Activated CD8-positive, alpha-beta T cell treated with anti-CD3 and anti-CD28 coated beads for 36 hours (primary cell): ENCODE measurements at regions of chr19 and their contacts with region 1.

Region 1: GRCh38 chr19:36605101-36605876 is at the start of gene ZNF382:
- DNase-seq: peak; percentile 89
- ATAC-seq: peak; percentile 81
- H3K4me3 Mint-ChIP-seq: peak within 1 kb of the TSS; percentile 98
- H3K27ac Mint-ChIP-seq: peak within 1 kb of the TSS; percentile 98
- H3K4me1 Mint-ChIP-seq: peaks cover 21% of the 10 kb centered on the region
- H3K27me3 Mint-ChIP-seq: no peaks in the 10 kb centered on the region
- CTCF ChIP-seq: no peak
- total RNA-seq, gene ZNF382: 10.1 to 10.8 TPM

Region 2: DNA sequence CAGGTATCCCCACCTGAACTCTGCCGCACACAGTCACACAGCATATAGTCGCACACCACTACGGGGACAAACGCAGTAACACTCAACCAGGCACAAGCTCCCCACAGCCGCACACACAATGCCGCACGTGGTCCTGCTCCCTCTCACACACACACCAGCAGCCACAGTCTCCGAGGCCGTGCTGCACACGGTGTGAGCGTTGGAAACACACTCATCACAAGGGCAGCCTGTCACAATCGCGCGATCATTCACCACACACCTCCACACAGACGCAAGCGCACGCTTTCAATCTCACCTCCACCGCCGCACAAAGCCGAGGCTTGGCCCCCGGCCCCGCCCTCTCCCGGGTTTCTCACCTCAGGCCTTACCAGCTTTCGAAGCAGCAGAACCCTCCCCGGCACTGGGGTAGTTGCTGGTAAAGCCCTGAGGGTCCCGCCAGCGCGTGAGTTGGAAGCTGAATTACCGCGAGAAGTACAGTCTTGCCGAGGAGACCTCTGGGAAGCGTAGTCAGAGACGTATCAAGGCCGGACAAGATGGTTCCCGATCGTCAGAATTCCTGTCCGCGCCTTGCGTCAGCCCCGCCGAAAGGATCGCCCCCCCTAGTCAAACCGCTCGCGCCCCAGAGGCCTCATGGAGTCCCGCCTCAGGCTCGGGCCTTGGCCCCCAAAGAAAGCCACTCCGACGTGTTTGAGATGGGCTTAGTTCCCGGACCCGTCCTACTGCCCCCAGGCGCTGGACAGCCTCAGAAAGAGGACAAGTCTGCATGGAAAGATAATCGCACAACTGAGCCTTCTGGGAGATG is 116.0 kb before region 1 on chr19 and contains the start of gene ZNF566:
- CTCF ChIA-PET with region 1: no interaction called
- POLR2A ChIA-PET with region 1: interaction called, 15 read pairs
- intact Hi-C with region 1: no loop called
- DNase-seq: peak; percentile 98
- ATAC-seq: peak; percentile 94
- H3K4me3 Mint-ChIP-seq: peak within 1 kb of the TSS; percentile 94
- H3K27ac Mint-ChIP-seq: peak within 1 kb of the TSS; percentile 98
- H3K4me1 Mint-ChIP-seq: peaks cover 25% of the 10 kb centered on the region
- H3K27me3 Mint-ChIP-seq: no peaks in the 10 kb centered on the region
- CTCF ChIP-seq: no peak
- total RNA-seq, gene ZNF566: 5.6 to 6.5 TPM

Region 3: DNA sequence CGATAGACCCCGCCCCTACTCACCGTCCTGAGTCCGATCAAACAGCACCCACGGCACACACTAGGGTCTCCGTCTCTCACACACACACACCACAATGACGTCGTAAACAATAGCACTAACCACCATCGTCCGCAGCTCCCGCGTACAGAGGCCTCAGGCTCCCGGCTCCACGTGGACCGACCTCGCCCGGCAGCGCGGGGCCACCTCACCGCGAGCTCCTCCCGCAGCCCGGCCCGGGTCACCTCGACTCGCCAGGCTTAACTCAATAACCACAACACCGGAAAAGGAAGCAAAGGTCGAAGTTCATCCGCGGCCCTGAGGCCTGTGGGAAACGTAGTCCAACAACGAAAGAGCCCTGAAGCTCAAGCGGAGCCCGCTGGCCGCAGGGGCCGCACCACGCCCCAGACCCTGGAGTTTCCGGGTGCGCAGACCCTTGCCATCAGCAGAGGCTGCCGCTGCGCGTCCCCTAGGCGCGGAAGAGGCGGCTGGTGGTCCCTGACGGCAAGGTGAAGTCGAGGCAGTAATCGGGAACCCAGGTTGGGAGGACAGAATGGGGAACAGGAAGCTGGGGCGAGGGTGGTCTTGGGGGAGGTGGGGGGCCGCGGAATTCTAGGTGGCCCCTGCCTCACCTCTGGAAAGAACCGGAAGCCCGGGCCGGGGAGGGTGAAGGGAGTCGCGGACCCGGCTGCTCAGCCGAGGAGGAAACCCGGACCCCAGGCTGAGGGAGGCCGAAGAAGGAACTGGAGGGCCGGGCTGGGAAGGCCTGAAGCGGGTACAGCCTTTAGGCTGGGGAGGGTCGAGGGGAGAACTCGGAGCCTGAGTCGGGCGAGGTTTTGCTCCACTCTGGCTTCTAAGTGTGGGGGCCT is 32.0 kb before region 1 on chr19 and contains the start of gene ZNF529:
- CTCF ChIA-PET with region 1: no interaction called
- POLR2A ChIA-PET with region 1: interaction called, 14 read pairs
- intact Hi-C with region 1: no loop called
- DNase-seq: peak; percentile 92
- ATAC-seq: peak; percentile 90
- H3K4me3 Mint-ChIP-seq: peak within 1 kb of the TSS; percentile 83
- H3K27ac Mint-ChIP-seq: peak within 1 kb of the TSS; percentile 95
- H3K4me1 Mint-ChIP-seq: peaks cover 27% of the 10 kb centered on the region
- H3K27me3 Mint-ChIP-seq: no peaks in the 10 kb centered on the region
- CTCF ChIP-seq: no peak
- total RNA-seq, gene ZNF529: 18.5 to 19.2 TPM

Region 4: DNA sequence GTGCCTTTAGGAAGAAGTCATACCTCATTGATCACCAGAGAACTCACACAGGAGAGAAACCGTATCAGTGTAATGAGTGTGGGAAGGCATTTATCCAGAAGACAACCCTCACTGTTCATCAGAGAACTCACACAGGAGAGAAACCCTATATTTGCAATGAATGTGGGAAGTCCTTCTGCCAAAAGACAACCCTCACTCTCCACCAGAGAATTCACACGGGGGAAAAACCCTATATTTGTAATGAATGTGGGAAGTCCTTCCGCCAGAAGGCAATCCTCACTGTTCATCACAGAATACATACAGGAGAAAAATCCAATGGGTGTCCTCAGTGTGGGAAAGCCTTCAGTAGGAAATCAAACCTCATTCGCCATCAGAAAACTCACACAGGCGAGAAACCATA is 21.8 kb after region 1 on chr19:
- CTCF ChIA-PET with region 1: no interaction called
- POLR2A ChIA-PET with region 1: no interaction called
- intact Hi-C with region 1: no loop called
- DNase-seq: no peak
- ATAC-seq: no peak
- H3K4me3 Mint-ChIP-seq: no peak overlapping the region
- H3K27ac Mint-ChIP-seq: no peak overlapping the region
- H3K4me1 Mint-ChIP-seq: no peaks in the 10 kb centered on the region
- H3K27me3 Mint-ChIP-seq: no peaks in the 10 kb centered on the region
- CTCF ChIP-seq: no peak